Uterus (tissue), 4 donors: ENCODE measurements at regions of chr4 and their contacts with region 1.

Region 1: GRCh38 chr4:37891260-37892159 is 626 bp downstream of the TBC1D1 start:
- DNase-seq: peak; percentile 48 to 69
- H3K4me3 ChIP-seq: peak overlapping the region; percentile 61 to 64
- H3K27ac ChIP-seq: peak overlapping the region; percentile 92 to 94
- H3K4me1 ChIP-seq: peaks cover 0 to 9% of the 10 kb centered on the region in 2 donors
- H3K27me3 ChIP-seq: no peaks in the 10 kb centered on the region
- CTCF ChIP-seq: peak in 2 of 4 experiments; percentile 21 to 27
- POLR2A ChIP-seq: peak in 1 of 2 donors; percentile 38

Region 2: DNA sequence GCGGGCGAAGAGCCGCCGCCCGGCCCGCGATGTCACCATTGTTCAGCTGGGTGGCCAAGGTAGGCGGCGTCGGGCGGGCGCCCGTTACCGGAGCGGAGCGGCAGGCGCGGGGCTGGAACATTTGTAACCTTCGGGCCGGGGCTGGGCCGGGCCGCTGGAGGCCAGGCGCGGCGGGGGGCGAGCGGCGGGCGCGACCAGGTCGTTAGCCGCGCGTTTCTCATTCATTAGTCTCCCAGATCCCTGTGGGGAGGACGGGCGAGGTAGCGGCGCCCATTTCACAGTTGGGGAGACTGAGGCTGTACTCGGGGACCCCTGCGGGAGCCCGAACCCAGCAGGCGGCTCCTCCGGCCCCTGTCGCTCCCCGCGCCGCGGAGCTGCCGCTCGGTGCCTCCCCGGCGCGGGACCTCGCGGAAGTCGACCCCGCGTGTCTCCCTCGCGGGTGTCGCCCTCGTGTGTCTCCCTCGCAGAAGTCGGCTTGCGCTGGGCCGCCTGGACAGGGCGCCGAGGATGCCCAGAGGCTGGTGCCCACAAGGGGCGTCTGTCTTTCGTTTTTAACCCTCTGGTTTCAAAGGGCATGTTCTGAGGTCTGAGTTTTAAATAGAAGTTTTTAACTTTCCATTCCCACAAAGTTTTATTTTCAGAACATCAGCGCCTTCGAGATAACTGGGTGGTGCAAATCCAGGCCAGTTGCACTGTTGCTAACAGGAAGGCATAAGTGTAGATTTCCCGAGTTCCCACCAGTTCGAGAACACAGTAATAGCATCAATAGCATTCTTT is 86.1 kb after region 1 on chr4:
- intact Hi-C with region 1: loop called (anchors 10 kb)
- DNase-seq: peak; percentile 75 to 78
- H3K4me3 ChIP-seq: peak overlapping the region; percentile 39 to 73
- H3K27ac ChIP-seq: peak overlapping the region; percentile 95 to 99
- H3K4me1 ChIP-seq: no peaks in the 10 kb centered on the region
- H3K27me3 ChIP-seq: no peaks in the 10 kb centered on the region
- CTCF ChIP-seq: peak; percentile 70 to 85 (median 74)
- POLR2A ChIP-seq: peak; percentile 2 to 39

Region 3: GRCh38 chr4:38046728-38047489 is 155.4 kb after region 1 on chr4:
- intact Hi-C with region 1: no loop called
- DNase-seq: no peak
- H3K4me3 ChIP-seq: no peak overlapping the region
- H3K27ac ChIP-seq: peak overlapping the region; percentile 32 to 71
- H3K4me1 ChIP-seq: no peaks in the 10 kb centered on the region
- H3K27me3 ChIP-seq: no peaks in the 10 kb centered on the region
- CTCF ChIP-seq: no peak
- POLR2A ChIP-seq: no peak

Region 4: DNA sequence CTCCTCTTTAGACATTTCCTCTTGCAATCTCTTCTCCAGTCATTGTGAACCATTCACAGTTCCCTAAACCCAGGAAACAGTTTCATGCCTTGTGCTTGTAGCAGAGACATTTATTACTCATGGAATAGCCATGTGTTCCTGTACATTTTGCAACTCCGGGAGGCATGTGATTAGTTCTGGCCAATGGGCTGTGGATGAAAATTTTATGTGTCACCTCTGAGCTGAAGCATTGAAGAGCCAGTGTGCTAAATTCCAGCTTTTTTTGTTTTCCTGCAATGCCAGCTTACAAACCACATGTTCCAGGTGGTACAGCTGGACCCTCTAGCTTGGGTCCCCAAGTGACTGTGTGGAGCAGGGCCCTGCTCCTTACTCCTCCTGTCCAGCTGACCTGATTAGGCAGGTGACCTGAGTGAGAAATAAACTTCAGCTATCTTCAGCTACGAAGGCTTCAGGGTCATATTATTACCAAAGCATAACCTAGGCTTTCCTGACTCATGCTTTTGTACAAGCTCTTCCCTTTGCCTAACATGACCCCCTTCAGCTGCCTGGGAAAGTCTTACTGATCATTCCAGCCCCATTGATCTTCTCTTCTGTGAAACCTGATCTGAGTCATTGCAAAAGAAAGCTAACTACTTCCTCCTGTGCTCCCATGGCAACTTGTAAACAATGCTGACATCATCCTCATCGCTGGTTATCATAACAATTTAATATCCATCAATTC is 269.1 kb after region 1 on chr4:
- intact Hi-C with region 1: no loop called
- DNase-seq: peak; percentile 30 to 59
- H3K4me3 ChIP-seq: no peak overlapping the region
- H3K27ac ChIP-seq: peak overlapping the region in 1 of 2 donors; percentile 61
- H3K4me1 ChIP-seq: peaks cover 6% of the 10 kb centered on the region in 2 donors
- H3K27me3 ChIP-seq: no peaks in the 10 kb centered on the region
- CTCF ChIP-seq: no peak
- POLR2A ChIP-seq: no peak

Region 5: GRCh38 chr4:38461342-38461741 is 569.8 kb after region 1 on chr4:
- intact Hi-C with region 1: no loop called
- DNase-seq: no peak
- H3K4me3 ChIP-seq: no peak overlapping the region
- H3K27ac ChIP-seq: no peak overlapping the region
- H3K4me1 ChIP-seq: no peaks in the 10 kb centered on the region
- H3K27me3 ChIP-seq: no peaks in the 10 kb centered on the region
- CTCF ChIP-seq: no peak
- POLR2A ChIP-seq: no peak